T-cell (primary cell): ENCODE measurements at regions of chr12 and their contacts with region 1.

Region 1: DNA sequence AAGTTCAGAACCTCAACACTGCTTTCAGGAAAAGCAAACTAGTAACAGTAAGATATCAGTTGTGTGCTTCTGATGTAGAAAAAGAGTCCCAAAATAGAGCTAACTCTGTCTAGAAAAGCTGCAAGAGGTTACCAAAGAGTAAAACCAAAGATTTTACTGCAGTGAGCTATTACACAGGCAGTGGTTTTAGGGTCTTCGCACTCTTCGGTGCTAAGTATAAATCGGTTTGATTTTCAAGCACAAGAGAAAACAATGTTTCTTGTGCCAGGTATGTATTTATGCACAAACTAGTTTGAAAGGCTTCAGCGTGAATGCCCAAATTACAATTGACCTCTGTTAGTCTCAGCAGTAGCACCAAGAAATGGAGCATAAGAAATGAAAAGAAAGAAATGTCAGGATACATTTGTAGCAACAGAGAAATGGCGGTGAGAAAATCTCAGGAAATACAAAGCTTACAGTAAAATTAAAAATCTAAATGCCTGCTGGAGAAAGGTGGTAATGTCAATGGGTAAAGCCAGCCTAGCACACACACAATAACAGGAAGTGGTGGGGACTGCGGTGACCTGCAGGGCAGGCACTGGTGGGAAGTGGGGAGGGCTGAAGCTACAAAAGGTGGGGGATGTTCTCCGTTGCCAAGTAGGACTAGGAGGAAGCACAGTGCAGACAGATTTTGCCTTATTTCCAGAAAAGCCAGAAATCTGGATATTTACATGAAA is 18.0 kb upstream of the DYRK2 start:
- DNase-seq: peak; percentile 64 to 95 (median 89)
- ATAC-seq: peak; percentile 99 to 100 (median 100)
- H3K4me3 ChIP-seq: no peak overlapping the region
- H3K4me3 Mint-ChIP-seq: peak overlapping the region; percentile 36 to 62 (median 60)
- H3K27ac ChIP-seq: peak overlapping the region; percentile 82
- H3K27ac Mint-ChIP-seq: peak overlapping the region; percentile 92 to 96
- H3K4me1 ChIP-seq: peaks cover 49 to 79% of the 10 kb centered on the region in 2 experiments
- H3K4me1 Mint-ChIP-seq: peaks cover 82 to 88% (median 86%) of the 10 kb centered on the region in 3 donors
- H3K27me3 ChIP-seq: no peaks in the 10 kb centered on the region
- H3K27me3 Mint-ChIP-seq: no peaks in the 10 kb centered on the region

Region 2: DNA sequence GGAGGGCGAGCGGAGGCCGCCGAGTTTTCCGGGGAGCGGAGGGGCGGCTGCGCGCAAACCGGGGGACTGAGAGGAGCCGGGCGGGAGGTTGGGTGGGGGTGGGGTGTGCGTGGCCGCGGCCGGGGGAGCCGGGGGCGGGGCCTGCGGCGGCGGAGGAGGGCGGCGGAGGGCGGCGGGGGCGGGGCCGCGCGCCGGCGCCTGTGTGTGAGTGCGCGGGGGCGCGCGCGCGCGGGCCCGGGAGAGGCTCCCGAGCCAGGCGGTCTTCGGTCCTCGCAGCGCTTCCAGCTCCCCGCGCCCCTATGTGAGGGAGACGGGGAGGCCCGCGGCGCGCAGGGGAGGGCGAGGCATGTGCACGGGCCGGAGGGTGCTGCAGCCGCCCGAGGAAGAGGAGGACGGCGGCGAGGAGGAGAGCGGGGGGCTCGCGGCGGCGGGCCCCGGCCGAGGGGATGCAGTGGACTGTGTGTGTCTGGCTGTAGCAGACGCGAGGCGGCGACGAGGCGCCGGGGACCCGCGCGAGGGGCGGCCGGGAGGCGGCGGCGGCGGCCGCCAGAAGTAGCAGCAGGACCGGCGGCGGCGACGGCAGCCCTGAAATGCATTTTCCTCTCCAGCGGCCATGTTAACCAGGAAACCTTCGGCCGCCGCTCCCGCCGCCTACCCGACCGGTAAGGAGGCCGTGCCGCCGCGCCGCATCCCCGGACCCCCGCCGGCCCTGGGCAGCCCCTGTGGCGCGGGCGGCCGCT is 18.2 kb after region 1 on chr12 and contains the start of gene DYRK2:
- CTCF ChIA-PET with region 1: interaction called, 7 to 11 read pairs
- POLR2A ChIA-PET with region 1: interaction called in 1 of 2 experiments, 6 read pairs
- DNase-seq: peak; percentile 57 to 91 (median 75)
- ATAC-seq: peak; percentile 64 to 67 (median 66)
- H3K4me3 ChIP-seq: peak within 1 kb of the TSS; percentile 92 to 96
- H3K4me3 Mint-ChIP-seq: peak within 1 kb of the TSS; percentile 94 to 99 (median 94)
- H3K27ac ChIP-seq: peak within 1 kb of the TSS; percentile 81
- H3K27ac Mint-ChIP-seq: peak within 1 kb of the TSS; percentile 91 to 95
- H3K4me1 ChIP-seq: peaks cover 21 to 28% of the 10 kb centered on the region in 2 experiments
- H3K4me1 Mint-ChIP-seq: peaks cover 37 to 48% (median 44%) of the 10 kb centered on the region in 3 donors
- H3K27me3 ChIP-seq: no peaks in the 10 kb centered on the region
- H3K27me3 Mint-ChIP-seq: no peaks in the 10 kb centered on the region
- total RNA-seq, gene DYRK2: 104 to 138 (median 120) TPM

Region 3: DNA sequence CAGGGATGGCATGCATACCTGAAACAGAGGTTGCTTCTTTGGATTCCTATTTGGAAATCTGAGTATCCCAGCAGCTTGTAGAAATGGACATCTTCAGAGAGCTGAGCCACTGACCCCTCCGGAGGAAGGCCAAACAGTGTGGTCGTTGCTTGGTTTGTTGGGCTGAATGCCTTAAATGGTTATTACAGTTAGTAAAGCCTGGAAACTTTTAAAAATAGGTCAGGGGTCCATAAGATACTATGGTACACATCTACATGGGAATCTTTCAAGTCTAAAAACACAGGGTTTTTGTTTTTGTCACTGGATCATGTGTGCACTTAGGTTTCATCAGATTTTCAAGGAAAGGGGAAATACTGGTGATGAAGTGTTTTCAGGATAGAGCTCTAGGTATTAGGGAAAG is 25.7 kb after region 1 on chr12:
- CTCF ChIA-PET with region 1: interaction called in 1 of 2 experiments, 6 read pairs
- POLR2A ChIA-PET with region 1: interaction called in 1 of 2 experiments, 19 read pairs
- DNase-seq: no peak
- ATAC-seq: no peak
- H3K4me3 ChIP-seq: no peak overlapping the region
- H3K4me3 Mint-ChIP-seq: peak overlapping the region; percentile 14 to 78 (median 22)
- H3K27ac ChIP-seq: no peak overlapping the region
- H3K27ac Mint-ChIP-seq: peak overlapping the region; percentile 24 to 48
- H3K4me1 ChIP-seq: peaks cover 35 to 54% of the 10 kb centered on the region in 2 experiments
- H3K4me1 Mint-ChIP-seq: peaks cover 91 to 94% (median 93%) of the 10 kb centered on the region in 3 donors
- H3K27me3 ChIP-seq: no peaks in the 10 kb centered on the region
- H3K27me3 Mint-ChIP-seq: no peaks in the 10 kb centered on the region